Dorsolateral prefrontal cortex (tissue), 120 donors: ENCODE measurements at regions of chr13 and their contacts with region 1.

Region 1: DNA sequence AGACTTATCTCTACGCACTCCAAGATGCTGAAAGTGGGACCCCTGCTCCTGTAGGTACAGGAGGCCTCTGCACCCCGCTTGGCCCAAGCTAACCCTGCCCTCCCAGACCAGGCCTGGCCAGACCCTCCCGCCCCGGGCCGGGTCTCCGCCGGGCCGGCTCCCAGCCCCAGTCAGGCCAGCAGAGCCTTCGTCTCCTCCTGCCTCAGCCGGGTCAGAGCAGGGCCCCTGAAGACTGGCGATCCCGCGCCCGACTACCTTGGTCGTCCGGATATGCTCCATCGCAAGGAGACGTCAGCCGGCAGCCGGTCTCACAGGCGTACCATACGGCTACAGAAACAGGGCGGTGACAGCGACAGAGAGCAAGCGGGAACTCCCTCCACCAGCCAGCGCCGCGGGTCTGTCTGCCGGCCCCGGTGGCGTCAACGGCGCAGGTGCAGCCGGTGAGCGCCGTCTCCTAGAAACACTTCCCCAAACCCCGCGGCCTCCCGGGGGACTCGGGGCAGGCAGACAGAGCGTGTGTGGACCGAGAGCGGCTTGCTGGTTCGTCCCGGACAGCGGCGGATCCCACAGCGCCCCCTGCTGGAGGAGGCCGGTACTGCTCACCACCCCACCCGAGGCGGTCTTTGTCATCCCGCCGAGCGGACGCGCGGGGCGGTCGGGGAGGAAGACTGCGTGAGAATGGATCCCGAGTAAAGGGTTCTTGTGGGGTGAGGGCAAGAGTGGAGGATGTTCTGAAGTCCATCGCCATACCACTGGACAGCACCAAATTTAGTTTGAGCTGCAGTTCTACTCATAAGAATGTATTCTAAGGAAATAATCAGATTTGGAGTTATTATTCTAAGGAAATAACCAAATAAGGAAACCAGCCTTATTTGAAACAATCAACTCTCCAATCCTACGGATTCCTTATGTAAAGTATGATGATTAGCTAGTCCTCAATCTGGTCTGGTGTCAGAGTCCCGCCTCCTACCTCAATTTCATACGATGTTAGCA is at the start of gene MTMR6:
- DNase-seq: peak; percentile 86 to 96 (median 92)
- H3K4me3 ChIP-seq: peak within 1 kb of the TSS; percentile 58 to 100 (median 94)
- H3K27ac ChIP-seq: peak within 1 kb of the TSS in 58 of 59 donors; percentile 44 to 95 (median 87)
- H3K27me3 ChIP-seq: no peaks in the 10 kb centered on the region
- CTCF ChIP-seq: peak; percentile 96 to 100 (median 100)
- total RNA-seq, gene MTMR6: 12.7 to 34.5 (median 25.1) TPM

Region 2: DNA sequence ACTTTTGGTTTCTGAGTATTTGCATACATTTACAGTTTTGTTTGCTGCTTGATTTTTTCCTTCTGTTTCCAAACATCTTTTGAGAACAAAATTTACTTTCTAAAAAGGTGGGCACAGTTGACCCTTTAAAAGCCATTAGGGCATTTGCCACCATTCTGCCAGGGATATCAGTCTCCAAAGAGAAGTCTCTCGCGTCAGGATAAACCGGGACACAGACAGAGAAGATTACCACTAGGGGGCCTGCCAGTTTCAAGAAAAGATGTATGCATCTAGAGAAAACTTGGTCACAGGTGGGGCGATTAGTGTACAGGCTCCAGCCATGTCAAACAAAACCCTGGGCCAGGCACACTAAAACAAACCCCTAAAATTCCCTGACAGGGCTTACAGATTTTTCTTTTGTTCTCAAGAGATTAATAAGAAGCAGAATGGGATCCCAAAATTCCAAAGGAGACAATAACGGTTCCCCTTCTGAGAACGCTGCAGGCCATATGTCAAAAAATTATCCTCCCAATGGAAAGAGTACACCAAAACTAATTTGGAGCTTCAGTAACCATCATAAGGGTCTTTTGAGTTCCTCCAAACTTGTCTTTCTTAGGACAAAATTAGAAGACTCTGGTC is 202.0 kb before region 1 on chr13:
- intact Hi-C with region 1: loop called (anchors 5 to 10 kb)
- DNase-seq: peak in 7 of 10 donors; percentile 41 to 82 (median 66)
- H3K4me3 ChIP-seq: peak overlapping the region in 21 of 59 donors; percentile 3 to 42 (median 18)
- H3K27ac ChIP-seq: peak overlapping the region in 56 of 59 donors; percentile 9 to 89 (median 71)
- H3K27me3 ChIP-seq: no peaks in the 10 kb centered on the region
- CTCF ChIP-seq: peak; percentile 59 to 89 (median 78)

Region 3: DNA sequence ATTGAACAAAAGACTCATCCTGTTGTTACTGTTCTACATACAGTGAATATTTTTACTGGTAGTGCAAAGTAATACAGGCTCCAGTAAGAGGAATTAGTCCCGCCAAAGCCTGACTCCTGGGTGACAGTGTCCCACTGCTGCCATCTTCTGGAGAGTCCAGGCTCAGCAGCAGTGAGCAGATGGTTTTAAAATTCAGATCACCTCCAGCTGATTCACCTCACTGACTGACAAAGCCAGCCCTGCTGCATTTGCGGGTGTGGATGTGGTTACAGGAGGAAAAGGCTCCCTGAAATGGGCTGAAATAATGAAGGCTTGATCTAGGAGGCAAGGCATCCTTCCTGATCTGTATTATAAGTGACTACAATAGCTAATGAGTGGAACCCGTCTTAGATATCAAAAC is 173.0 kb before region 1 on chr13:
- intact Hi-C with region 1: loop called in 1 of 2 experiments (anchors 10 kb)
- DNase-seq: peak; percentile 72 to 89 (median 85)
- H3K4me3 ChIP-seq: peak overlapping the region in 16 of 59 donors; percentile 2 to 40 (median 16)
- H3K27ac ChIP-seq: peak overlapping the region in 37 of 59 donors; percentile 5 to 74 (median 50)
- H3K27me3 ChIP-seq: no peaks in the 10 kb centered on the region
- CTCF ChIP-seq: peak; percentile 64 to 99 (median 91)

Region 4: GRCh38 chr13:25192936-25193335 is 94.3 kb before region 1 on chr13:
- intact Hi-C with region 1: loop called in 1 of 2 experiments (anchors 10 kb)
- DNase-seq: peak in 9 of 10 donors; percentile 75 to 96 (median 90)
- H3K4me3 ChIP-seq: peak overlapping the region in 16 of 59 donors; percentile 1 to 45 (median 27)
- H3K27ac ChIP-seq: peak overlapping the region; percentile 80 to 100 (median 98)
- H3K27me3 ChIP-seq: peaks cover 0 to 8% (median 0%) of the 10 kb centered on the region in 45 donors
- CTCF ChIP-seq: peak in 8 of 56 donors; percentile 3 to 28 (median 13)

Region 5: GRCh38 chr13:25301347-25302047 is 14.2 kb after region 1 on chr13 and contains the start of gene NUP58:
- intact Hi-C with region 1: loop called (anchors 1 to 2 kb)
- DNase-seq: peak; percentile 95 to 98 (median 96)
- H3K4me3 ChIP-seq: peak within 1 kb of the TSS; percentile 59 to 99 (median 89)
- H3K27ac ChIP-seq: peak within 1 kb of the TSS; percentile 77 to 98 (median 93)
- H3K27me3 ChIP-seq: no peaks in the 10 kb centered on the region
- CTCF ChIP-seq: peak in 42 of 56 donors; percentile 5 to 65 (median 33)
- total RNA-seq, gene NUP58: 37.0 to 77.1 (median 58.6) TPM